ENCODE measurements at regions of chr10 and their contacts with region 1.

Region 1: GRCh38 chr10:14959276-14960057 is at the start of gene MEIG1:
- DNase-seq: peak; percentile 98
- total RNA-seq, gene MEIG1: not detected

Region 2: DNA sequence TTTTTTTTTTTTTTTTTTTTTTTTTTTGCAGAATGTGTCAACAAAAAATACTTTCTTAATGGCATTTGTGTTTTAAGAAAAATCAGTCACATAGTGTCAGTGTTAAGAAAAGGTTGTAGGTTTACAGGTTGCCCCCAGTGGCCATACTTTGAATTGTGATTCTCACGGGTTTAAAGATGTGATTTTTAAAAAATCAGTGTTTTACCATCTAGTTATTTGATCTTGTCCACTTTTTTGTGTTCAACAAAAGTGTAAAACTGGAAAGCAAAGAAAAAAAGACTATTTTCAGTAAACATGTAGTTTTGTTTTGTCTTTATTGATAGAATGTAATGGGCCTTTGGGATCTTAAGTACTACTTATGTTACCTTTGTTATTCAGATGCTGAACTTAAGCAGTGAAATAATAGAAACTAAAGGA is 55.1 kb before region 1 on chr10:
- intact Hi-C with region 1: loop called in 1 of 2 experiments (anchors 5 kb)
- DNase-seq: no peak

Region 3: GRCh38 chr10:15106352-15107013 is 147.0 kb after region 1 on chr10:
- intact Hi-C with region 1: loop called in 1 of 2 experiments (anchors 10 kb)
- DNase-seq: no peak

Region 4: GRCh38 chr10:15223174-15223573 is 263.7 kb after region 1 on chr10:
- intact Hi-C with region 1: no loop called
- DNase-seq: no peak

Region 5: GRCh38 chr10:16020836-16021235 is 1061.4 kb after region 1 on chr10:
- intact Hi-C with region 1: no loop called
- DNase-seq: no peak

Measured in posterior vena cava (tissue), 2 donors.